ENCODE measurements at regions of chr12 and their contacts with region 1.

Region 1: DNA sequence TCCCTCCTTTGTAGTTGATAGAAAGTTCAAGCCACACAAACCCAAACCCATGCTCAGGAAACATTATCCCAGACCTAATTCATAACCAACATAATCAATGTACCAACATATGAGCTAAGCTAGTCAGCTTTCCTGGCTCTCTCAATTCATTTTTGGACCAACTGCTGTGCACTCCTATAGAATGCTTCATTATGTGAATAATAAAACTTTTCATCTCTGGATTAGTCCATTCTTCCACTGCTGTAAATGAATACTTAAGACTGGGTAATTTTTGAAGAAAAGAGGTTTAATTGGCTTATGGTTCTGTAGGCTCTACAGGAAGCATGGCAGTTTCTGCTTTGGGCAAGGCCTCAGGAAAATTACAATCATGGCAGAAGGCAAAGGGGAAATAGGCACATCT is 651.9 kb downstream of the RERGL start:
- DNase-seq: no peak
- ATAC-seq: no peak
- H3K4me3 ChIP-seq: no peak overlapping the region
- H3K4me3 Mint-ChIP-seq: no peak overlapping the region
- H3K27ac ChIP-seq: no peak overlapping the region
- H3K27ac Mint-ChIP-seq: no peak overlapping the region
- H3K4me1 ChIP-seq: no peaks in the 10 kb centered on the region
- H3K4me1 Mint-ChIP-seq: no peaks in the 10 kb centered on the region
- H3K27me3 ChIP-seq: no peaks in the 10 kb centered on the region
- H3K27me3 Mint-ChIP-seq: no peaks in the 10 kb centered on the region
- CTCF ChIP-seq: no peak

Region 2: GRCh38 chr12:17456486-17456885 is 18.3 kb after region 1 on chr12:
- CTCF ChIA-PET with region 1: no interaction called
- POLR2A ChIA-PET with region 1: no interaction called
- intact Hi-C with region 1: loop called in 1 of 2 experiments (anchors 1 kb)
- DNase-seq: no peak
- ATAC-seq: no peak
- H3K4me3 ChIP-seq: no peak overlapping the region
- H3K4me3 Mint-ChIP-seq: no peak overlapping the region
- H3K27ac ChIP-seq: no peak overlapping the region
- H3K27ac Mint-ChIP-seq: no peak overlapping the region
- H3K4me1 ChIP-seq: no peaks in the 10 kb centered on the region
- H3K4me1 Mint-ChIP-seq: no peaks in the 10 kb centered on the region
- H3K27me3 ChIP-seq: no peaks in the 10 kb centered on the region
- H3K27me3 Mint-ChIP-seq: no peaks in the 10 kb centered on the region
- CTCF ChIP-seq: no peak